ENCODE measurements at regions of chr7 and their contacts with region 1.

Region 1: GRCh38 chr7:128209229-128210035 is 31.6 kb upstream of the LEP start:
- DNase-seq: peak; percentile 74
- ATAC-seq: peak; percentile 96
- H3K4me3 Mint-ChIP-seq: no peak overlapping the region
- H3K27ac Mint-ChIP-seq: no peak overlapping the region
- H3K4me1 Mint-ChIP-seq: no peaks in the 10 kb centered on the region
- H3K27me3 Mint-ChIP-seq: peaks cover 9% of the 10 kb centered on the region
- CTCF ChIP-seq: peak; percentile 96

Region 2: GRCh38 chr7:128031901-128032604 is 177.4 kb before region 1 on chr7:
- CTCF ChIA-PET with region 1: interaction called, 13 read pairs
- POLR2A ChIA-PET with region 1: no interaction called
- intact Hi-C with region 1: loop called (anchors 10 kb)
- DNase-seq: peak; percentile 76
- ATAC-seq: peak; percentile 92
- H3K4me3 Mint-ChIP-seq: peak overlapping the region; percentile 70
- H3K27ac Mint-ChIP-seq: no peak overlapping the region
- H3K4me1 Mint-ChIP-seq: peaks cover 9% of the 10 kb centered on the region
- H3K27me3 Mint-ChIP-seq: peaks cover 1% of the 10 kb centered on the region
- CTCF ChIP-seq: peak; percentile 27

Region 3: DNA sequence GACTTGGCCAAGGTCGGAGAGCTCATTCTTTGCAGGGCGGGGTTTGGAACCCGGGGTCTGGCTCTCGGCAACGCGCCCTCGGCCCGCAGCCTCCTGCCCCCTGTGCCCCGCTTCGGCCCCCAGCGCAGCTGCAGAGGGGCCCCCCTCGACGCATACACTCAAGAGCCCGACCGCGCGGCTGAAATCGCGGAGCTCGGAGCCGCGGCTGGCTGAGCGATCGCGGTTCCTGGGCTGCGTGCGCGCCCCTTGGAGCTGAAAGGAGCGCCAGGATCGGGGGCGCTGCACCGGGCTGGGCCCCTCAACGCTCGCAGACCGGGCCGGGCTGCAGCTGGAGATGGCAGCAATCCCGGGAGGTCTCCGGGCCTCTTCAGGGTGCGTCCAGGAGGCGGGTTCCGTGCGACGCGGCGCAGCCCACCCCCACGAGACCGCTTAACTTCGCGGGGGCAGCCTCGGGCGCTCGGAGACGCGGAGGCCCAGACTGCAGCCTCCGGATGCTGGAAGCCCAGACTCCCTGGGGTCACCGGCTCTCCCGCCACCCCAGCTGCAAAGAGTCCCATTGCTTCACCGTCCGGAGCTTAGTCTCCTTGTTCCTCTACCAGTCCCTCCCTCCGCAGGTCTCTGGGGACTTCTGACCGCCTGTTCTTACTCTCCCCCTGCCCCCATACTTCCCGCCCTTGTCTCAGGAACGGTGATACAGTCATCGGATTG is 105.2 kb before region 1 on chr7:
- CTCF ChIA-PET with region 1: interaction called, 37 read pairs
- POLR2A ChIA-PET with region 1: interaction called, 3 read pairs
- intact Hi-C with region 1: no loop called
- DNase-seq: peak; percentile 37
- ATAC-seq: peak; percentile 22
- H3K4me3 Mint-ChIP-seq: peak overlapping the region; percentile 75
- H3K27ac Mint-ChIP-seq: peak overlapping the region; percentile 62
- H3K4me1 Mint-ChIP-seq: peaks cover 50% of the 10 kb centered on the region
- H3K27me3 Mint-ChIP-seq: peaks cover 4% of the 10 kb centered on the region
- CTCF ChIP-seq: no peak

Region 4: DNA sequence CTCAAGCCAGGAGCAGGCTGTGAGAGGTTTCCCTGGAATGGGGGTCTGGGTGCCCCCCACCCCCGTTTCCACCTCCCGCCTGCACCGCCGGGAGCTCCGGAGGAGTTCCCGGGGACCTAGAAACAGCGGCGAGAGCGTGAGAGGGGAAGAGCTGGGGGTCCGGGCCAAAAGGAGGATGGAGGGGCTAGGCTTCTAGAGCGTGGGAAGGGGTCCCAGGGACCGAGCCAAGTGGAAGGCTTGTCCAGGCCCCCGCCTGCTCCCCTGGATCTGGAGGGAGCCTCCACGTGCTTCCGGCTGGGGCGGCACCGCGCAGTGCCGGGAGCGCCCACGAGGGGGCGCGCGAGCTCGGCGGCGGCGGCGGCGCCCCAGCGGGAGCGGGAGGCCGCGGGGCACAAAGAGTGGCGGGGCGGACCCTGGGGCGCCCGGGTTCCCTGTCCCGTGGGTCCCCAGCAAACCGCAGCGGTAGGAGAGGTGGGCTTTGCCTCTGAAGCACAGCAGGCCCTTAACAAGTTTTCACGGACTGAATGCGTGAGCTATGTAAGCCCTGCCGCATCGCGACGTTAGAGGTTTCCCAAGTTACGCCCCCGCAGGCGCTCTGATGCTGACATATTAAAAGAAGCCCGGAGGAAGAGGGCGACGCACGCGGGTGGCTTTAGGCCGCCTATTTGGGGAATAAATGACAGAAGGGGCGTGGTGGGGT is 73.8 kb before region 1 on chr7:
- CTCF ChIA-PET with region 1: interaction called, 92 read pairs
- POLR2A ChIA-PET with region 1: no interaction called
- intact Hi-C with region 1: loop called (anchors 2 kb)
- DNase-seq: peak; percentile 85
- ATAC-seq: peak; percentile 97
- H3K4me3 Mint-ChIP-seq: peak overlapping the region; percentile 65
- H3K27ac Mint-ChIP-seq: peak overlapping the region; percentile 28
- H3K4me1 Mint-ChIP-seq: peaks cover 16% of the 10 kb centered on the region
- H3K27me3 Mint-ChIP-seq: peaks cover 19% of the 10 kb centered on the region
- CTCF ChIP-seq: peak; percentile 85

Region 5: DNA sequence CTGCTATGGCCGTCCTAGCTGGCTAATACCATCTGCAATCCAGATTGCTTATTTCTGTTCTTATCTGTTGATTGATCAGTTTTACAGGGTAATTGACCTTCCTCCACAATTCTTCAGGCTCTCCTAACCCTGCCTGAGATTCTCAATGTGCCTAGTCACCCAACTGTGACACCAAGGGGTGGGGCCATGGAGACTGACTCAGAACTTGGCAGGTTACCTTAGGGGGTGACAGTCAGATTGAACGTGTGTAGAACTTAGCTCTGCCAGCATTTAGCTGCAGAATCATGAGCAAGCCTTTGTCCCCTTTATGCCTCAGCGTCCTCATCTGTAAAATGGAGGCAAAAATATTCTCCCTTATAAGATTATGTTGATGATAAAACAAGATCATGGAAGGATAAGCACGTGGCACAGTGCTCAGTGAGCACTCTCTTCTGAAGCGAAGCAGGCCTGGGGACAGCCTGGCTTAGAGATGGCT is 12.5 kb after region 1 on chr7:
- CTCF ChIA-PET with region 1: interaction called, 24 read pairs
- POLR2A ChIA-PET with region 1: no interaction called
- intact Hi-C with region 1: no loop called
- DNase-seq: peak; percentile 27
- ATAC-seq: peak; percentile 71
- H3K4me3 Mint-ChIP-seq: no peak overlapping the region
- H3K27ac Mint-ChIP-seq: no peak overlapping the region
- H3K4me1 Mint-ChIP-seq: no peaks in the 10 kb centered on the region
- H3K27me3 Mint-ChIP-seq: peaks cover 4% of the 10 kb centered on the region
- CTCF ChIP-seq: no peak